OCI-LY7 (cell line): ENCODE measurements at regions of chr3 and their contacts with region 1.

Region 1: GRCh38 chr3:25044762-25045710 is 383.0 kb upstream of the RARB start:
- DNase-seq: no peak
- H3K4me3 ChIP-seq: no peak overlapping the region
- H3K27ac ChIP-seq: no peak overlapping the region
- H3K4me1 ChIP-seq: no peaks in the 10 kb centered on the region
- CTCF ChIP-seq: no peak

Region 2: DNA sequence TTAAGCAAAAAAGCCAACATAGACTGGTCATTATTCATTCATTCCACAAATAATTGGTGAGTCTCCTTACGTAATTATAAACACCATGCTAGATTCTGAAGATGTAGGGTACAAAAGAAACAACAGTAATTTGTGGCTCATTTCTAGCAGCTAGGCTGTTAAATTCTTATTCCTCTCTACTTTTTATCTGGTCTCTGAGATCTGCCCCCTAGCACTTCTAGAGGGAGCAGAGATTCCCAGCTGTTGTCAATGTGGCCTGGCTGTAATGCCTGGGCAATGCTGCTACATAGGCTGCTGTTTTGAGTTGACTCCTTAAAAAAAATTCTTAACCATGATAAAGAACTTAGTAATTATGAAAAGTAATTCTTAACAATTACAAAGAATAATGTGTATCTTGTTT is 115.5 kb before region 1 on chr3:
- CTCF ChIA-PET with region 1: no interaction called
- POLR2A ChIA-PET with region 1: no interaction called
- intact Hi-C with region 1: no loop called
- DNase-seq: no peak
- H3K4me3 ChIP-seq: no peak overlapping the region
- H3K27ac ChIP-seq: no peak overlapping the region
- H3K4me1 ChIP-seq: no peaks in the 10 kb centered on the region
- CTCF ChIP-seq: no peak

Region 3: GRCh38 chr3:25120665-25121064 is 75.6 kb after region 1 on chr3:
- CTCF ChIA-PET with region 1: no interaction called
- POLR2A ChIA-PET with region 1: interaction called, 11 read pairs
- intact Hi-C with region 1: no loop called
- DNase-seq: no peak
- H3K4me3 ChIP-seq: no peak overlapping the region
- H3K27ac ChIP-seq: no peak overlapping the region
- H3K4me1 ChIP-seq: no peaks in the 10 kb centered on the region
- CTCF ChIP-seq: no peak